ENCODE measurements at regions of chr2 and their contacts with region 1.

Region 1: DNA sequence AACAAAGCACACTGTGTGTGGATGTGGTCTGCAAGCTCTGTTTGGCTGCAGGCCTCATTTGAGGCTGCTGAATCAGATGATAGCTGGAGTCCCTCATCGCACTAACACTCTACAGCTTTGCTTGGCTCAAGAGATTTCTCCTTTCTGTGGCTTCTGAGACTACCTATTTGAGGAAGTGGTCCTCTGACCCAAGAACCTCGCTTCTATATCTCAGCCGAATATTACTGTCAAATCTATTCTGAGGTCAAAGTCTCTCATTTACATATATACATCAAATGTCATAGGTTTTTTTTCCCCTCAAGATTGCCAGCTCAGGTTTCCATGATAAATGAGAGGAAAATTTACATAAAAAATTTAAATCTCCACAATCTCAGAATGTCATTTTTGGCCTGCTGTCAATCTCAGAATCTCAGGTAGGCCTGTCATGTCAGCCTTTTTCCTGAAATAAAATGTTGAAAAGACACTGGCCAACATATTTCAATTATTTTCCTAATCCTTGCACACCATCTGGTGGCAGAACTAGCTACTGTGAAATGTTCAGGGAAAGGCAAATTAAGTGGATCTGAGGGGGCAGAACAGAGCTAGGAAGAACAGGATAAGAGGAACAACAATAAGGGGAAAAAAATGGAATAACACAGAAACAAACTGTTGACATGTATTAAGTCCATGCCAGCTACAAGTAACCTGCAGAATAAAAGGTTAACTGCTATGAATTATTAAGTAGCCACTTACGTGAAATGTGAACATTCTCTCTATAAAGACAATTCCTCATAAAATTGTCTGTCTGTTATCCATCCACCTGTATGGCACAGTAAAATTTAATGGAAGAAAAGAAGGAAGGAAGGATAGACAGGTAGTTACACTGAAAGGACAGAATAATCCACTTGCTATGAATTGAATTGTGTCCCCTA is 39.3 kb downstream of the AP1S3 start:
- DNase-seq: no peak
- H3K4me3 ChIP-seq: no peak overlapping the region
- H3K27ac ChIP-seq: no peak overlapping the region
- H3K4me1 ChIP-seq: no peaks in the 10 kb centered on the region
- H3K27me3 ChIP-seq: no peaks in the 10 kb centered on the region
- CTCF ChIP-seq: peak; percentile 61 to 75 (median 68)

Region 2: GRCh38 chr2:222969491-222969890 is 828.6 kb before region 1 on chr2:
- intact Hi-C with region 1: loop called (anchors 2 kb)
- DNase-seq: no peak
- H3K4me3 ChIP-seq: no peak overlapping the region
- H3K27ac ChIP-seq: no peak overlapping the region
- H3K4me1 ChIP-seq: no peaks in the 10 kb centered on the region
- H3K27me3 ChIP-seq: no peaks in the 10 kb centered on the region
- CTCF ChIP-seq: no peak

Region 3: GRCh38 chr2:223692191-223692947 is 105.7 kb before region 1 on chr2:
- intact Hi-C with region 1: loop called (anchors 2 kb)
- DNase-seq: no peak
- H3K4me3 ChIP-seq: no peak overlapping the region
- H3K27ac ChIP-seq: no peak overlapping the region
- H3K4me1 ChIP-seq: no peaks in the 10 kb centered on the region
- H3K27me3 ChIP-seq: no peaks in the 10 kb centered on the region
- CTCF ChIP-seq: peak; percentile 33 to 70 (median 52)

Measured in ascending aorta (tissue), 2 donors.